HEK293 (cell line): ENCODE measurements at regions of chr11 and their contacts with region 1.

Region 1: GRCh38 chr11:13955971-13956421 is 6.5 kb upstream of the SPON1 start:
- H3K4me3 ChIP-seq: no peak overlapping the region
- H3K27ac ChIP-seq: no peak overlapping the region
- H3K4me1 ChIP-seq: no peaks in the 10 kb centered on the region
- CTCF ChIP-seq: no peak

Region 2: DNA sequence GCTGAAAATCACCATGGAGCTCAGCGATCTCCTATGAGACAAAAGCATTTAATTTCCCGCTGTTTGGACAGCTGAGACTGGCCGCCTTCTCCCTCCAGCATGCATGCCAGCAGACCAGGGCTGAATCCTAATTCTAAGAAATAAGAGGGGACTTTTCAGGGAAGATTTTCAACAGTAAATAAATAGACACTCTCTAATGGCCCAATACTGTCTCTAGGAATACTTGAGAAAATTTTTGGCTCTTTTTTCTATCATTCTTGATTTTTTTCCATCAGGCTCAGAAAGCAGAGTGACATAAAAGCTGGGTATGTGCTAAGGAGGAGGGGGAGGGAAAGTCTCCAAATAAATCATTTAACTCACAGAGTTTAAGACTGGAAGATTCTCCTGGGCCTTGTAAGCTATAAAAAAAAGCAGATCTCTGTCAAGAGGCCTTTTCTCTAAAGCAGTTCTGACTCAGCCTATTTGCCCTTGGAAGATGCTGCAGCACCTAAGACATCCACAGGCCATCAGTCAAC is 11.0 kb before region 1 on chr11:
- CTCF ChIA-PET with region 1: interaction called, 19 read pairs
- POLR2A ChIA-PET with region 1: no interaction called
- H3K4me3 ChIP-seq: no peak overlapping the region
- H3K27ac ChIP-seq: no peak overlapping the region
- H3K4me1 ChIP-seq: peaks cover 4% of the 10 kb centered on the region; the same call in 1 of the 2 replicates
- CTCF ChIP-seq: no peak

Region 3: GRCh38 chr11:14148653-14149273 is 192.8 kb after region 1 on chr11:
- CTCF ChIA-PET with region 1: interaction called, 68 read pairs
- POLR2A ChIA-PET with region 1: no interaction called
- H3K4me3 ChIP-seq: no peak overlapping the region
- H3K27ac ChIP-seq: no peak overlapping the region
- H3K4me1 ChIP-seq: no peaks in the 10 kb centered on the region
- CTCF ChIP-seq: no peak

Region 4: DNA sequence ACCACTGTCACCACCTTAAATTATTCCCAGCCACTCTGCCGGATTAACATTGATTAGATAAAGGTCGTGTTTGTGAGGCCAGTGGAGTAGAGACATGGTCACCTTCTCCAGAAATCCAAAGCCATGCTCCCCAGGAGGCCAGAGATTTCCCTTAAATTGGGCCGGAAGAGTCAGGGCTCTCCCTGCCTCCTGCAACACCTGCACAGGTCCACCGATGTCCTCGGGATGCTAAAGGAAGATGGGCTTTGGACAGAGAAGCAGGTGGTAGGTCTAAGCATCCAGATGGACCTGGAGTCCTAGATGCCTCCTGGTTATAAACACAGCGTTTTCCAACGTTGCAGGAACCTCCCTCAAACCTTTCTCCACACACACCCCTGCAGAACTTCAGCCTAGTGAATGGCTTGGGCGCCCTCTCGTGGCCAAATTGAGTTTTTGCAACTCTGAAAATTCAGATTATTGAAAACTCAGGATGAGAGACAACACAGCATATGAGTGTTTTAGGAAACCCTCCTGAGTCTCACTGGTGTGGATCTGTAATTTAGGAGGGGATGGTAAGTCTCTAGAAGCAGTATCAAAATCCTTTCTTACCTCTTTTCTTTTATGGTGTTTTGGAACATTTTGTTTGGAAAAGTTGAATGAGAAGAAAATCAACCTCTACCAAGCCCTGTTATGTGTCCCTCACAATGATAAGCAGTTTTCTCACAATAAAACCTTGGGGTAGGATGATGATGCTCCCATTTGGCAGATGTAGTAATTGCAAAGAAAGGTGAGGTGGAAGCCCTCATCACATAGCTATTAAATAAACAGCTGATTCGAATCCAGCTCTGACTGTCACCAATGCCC is 293.3 kb after region 1 on chr11:
- CTCF ChIA-PET with region 1: interaction called, 29 read pairs
- POLR2A ChIA-PET with region 1: no interaction called
- H3K4me3 ChIP-seq: no peak overlapping the region
- H3K27ac ChIP-seq: no peak overlapping the region
- H3K4me1 ChIP-seq: no peaks in the 10 kb centered on the region
- CTCF ChIP-seq: peak; percentile 44; the same call in 1 of the 2 replicates